Caco-2 (cell line): ENCODE measurements at regions of chr2 and their contacts with region 1.

Region 1: DNA sequence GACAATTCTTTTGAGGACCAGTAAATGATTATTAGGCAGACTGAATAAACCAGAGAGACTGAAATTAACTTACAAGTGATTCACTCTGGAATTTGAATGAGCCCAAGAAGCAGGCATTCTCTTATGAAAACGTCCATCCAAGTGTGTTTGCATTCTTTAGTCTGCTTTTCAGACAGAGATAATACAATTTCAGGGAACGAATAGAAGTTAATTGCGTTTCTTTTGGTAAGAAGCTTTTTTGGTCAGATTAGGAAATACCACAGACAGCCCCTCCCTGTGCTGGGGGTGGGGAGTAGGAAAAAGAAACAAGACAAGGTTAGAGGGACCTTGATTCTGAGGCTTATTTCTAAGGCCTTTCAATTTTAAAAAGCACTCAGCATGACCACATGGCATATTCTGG is 874.4 kb downstream of the SUCLG1 start:
- DNase-seq: no peak
- H3K4me3 ChIP-seq: no peak overlapping the region
- H3K4me3 Mint-ChIP-seq: no peak overlapping the region
- H3K27ac Mint-ChIP-seq: no peak overlapping the region
- H3K4me1 ChIP-seq: no peaks in the 10 kb centered on the region
- H3K4me1 Mint-ChIP-seq: no peaks in the 10 kb centered on the region
- H3K27me3 ChIP-seq: no peaks in the 10 kb centered on the region
- H3K27me3 Mint-ChIP-seq: no peaks in the 10 kb centered on the region
- CTCF ChIP-seq: no peak

Region 2: DNA sequence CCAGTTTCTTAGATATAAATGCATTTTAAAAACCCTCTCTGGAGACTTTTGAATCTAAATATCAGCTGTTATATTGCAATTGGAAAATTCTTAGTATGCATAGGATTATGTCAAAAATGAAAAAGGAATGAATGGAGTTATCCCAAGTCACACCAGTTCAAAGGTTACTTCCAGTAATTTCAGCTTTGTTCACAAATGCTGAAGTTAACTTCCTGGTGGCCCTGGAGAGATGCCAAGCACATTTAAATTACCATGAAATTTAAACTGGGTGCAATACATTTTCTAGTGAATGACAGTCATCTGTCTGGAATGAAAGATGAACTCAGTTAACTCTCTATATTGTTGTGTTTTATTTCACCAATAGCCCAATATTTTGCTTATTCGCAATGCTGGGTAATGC is 120.5 kb after region 1 on chr2:
- CTCF ChIA-PET with region 1: no interaction called
- POLR2A ChIA-PET with region 1: no interaction called
- intact Hi-C with region 1: no loop called
- DNase-seq: no peak
- H3K4me3 ChIP-seq: no peak overlapping the region
- H3K4me3 Mint-ChIP-seq: no peak overlapping the region
- H3K27ac Mint-ChIP-seq: no peak overlapping the region
- H3K4me1 ChIP-seq: no peaks in the 10 kb centered on the region
- H3K4me1 Mint-ChIP-seq: no peaks in the 10 kb centered on the region
- H3K27me3 ChIP-seq: no peaks in the 10 kb centered on the region
- H3K27me3 Mint-ChIP-seq: no peaks in the 10 kb centered on the region
- CTCF ChIP-seq: no peak

Region 3: GRCh38 chr2:83817511-83817910 is 232.8 kb after region 1 on chr2:
- CTCF ChIA-PET with region 1: no interaction called
- POLR2A ChIA-PET with region 1: no interaction called
- intact Hi-C with region 1: loop called (anchors 5 kb)
- DNase-seq: no peak
- H3K4me3 ChIP-seq: no peak overlapping the region
- H3K4me3 Mint-ChIP-seq: no peak overlapping the region
- H3K27ac Mint-ChIP-seq: no peak overlapping the region
- H3K4me1 ChIP-seq: peaks cover 7% of the 10 kb centered on the region
- H3K4me1 Mint-ChIP-seq: peaks cover 9% of the 10 kb centered on the region
- H3K27me3 ChIP-seq: no peaks in the 10 kb centered on the region
- H3K27me3 Mint-ChIP-seq: no peaks in the 10 kb centered on the region
- CTCF ChIP-seq: peak in 1 of 2 experiments; percentile 9

Region 4: DNA sequence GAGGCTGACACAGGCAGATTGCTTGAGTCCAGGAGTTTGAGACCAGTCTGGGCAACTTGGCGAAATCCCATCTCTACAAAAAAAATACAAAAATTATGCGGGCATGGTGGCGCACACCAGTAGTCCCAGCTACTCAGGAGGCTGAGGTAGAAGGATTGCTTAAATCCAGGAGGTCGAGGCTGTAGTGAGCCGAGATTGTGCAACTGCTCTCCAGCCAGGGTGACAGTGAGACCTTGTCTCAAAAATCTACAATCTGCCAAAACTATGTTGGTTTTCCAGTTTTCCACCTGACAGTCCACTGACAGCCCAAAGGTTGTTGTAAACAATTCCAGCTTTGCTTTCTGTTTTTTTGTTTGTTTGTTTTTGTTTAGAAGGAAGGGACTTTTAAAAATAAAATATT is 1437.6 kb after region 1 on chr2:
- CTCF ChIA-PET with region 1: no interaction called
- POLR2A ChIA-PET with region 1: no interaction called
- intact Hi-C with region 1: no loop called
- DNase-seq: no peak
- H3K4me3 ChIP-seq: no peak overlapping the region
- H3K4me3 Mint-ChIP-seq: no peak overlapping the region
- H3K27ac Mint-ChIP-seq: no peak overlapping the region
- H3K4me1 ChIP-seq: peaks cover 8% of the 10 kb centered on the region
- H3K4me1 Mint-ChIP-seq: peaks cover 19% of the 10 kb centered on the region
- H3K27me3 ChIP-seq: no peaks in the 10 kb centered on the region
- H3K27me3 Mint-ChIP-seq: no peaks in the 10 kb centered on the region
- CTCF ChIP-seq: no peak